Endothelial cell of umbilical vein (primary cell): ENCODE measurements at regions of chr6 and their contacts with region 1.

Region 1: DNA sequence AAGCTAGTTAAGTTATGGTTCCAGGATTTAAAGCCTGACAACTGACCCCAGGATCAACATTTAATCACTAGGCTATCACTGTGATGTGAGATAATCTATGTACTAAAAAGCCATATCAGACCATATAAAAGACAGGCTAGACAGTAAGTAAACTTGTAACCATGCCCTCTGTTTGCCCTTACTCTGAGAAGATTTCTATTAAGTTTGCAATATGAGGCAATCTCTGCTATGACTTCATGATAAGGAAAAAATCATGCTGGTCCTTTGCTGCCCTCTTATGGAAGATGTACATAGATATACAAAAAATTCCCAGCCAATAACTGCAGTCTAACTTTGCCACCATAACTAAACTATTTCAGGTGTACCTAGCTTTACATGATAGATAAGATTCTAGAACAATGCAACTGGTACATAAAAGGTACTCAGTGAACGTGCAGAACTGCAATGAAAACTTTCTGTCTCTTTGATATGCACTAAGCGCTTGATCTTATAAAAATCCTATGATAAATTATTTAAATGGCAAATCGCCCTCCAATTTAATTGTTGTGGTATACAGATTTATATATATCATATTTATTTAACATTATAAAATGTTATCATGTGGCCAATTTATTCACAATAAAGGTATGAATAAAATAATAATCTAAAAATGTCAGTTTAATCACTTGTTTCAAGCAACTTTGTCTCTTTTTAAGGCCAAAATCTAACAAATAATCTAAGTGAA is 70.5 kb downstream of the FAM217A start:
- DNase-seq: peak; percentile 76
- H3K4me3 ChIP-seq: no peak overlapping the region
- H3K27ac ChIP-seq: no peak overlapping the region
- H3K4me1 ChIP-seq: no peaks in the 10 kb centered on the region
- H3K27me3 ChIP-seq: no peaks in the 10 kb centered on the region
- CTCF ChIP-seq: peak; percentile 19 to 45
- POLR2A ChIP-seq: no peak

Region 2: DNA sequence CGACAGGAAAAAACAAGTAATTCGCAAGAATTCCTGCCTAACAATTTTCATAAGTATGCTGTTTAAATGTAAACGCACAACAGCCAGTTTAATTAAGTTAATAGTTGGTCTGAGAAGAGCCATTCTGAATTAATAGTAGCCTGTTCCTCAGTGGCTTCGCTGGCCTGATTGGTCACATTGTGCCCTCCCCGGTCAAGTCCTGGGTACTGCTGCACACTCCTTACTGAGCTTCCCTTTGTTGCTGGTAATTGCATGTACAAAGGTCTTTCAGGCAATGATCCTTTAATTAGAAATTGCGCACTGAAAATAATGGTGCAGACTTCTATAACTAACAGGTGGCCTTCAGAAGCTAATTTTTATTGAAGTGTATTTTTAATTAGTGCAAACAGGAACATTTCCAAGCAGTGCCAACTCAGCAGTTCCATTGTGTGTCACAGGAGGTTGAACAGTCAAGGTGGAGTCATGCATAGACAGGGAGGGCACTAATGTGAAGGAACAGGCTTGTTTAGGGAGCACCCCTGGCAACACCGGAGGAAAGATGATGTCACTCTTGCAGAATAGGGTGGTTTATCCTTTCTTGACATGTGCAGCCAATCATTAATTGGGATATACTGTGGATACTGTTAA is 459.1 kb before region 1 on chr6:
- CTCF ChIA-PET with region 1: no interaction called
- POLR2A ChIA-PET with region 1: no interaction called
- dilution Hi-C with region 1: no loop called
- intact Hi-C with region 1: loop called (anchors 10 kb)
- DNase-seq: peak; percentile 1
- H3K4me3 ChIP-seq: no peak overlapping the region
- H3K27ac ChIP-seq: no peak overlapping the region
- H3K4me1 ChIP-seq: no peaks in the 10 kb centered on the region
- H3K27me3 ChIP-seq: peaks cover 13 to 32% of the 10 kb centered on the region in 2 experiments
- CTCF ChIP-seq: no peak
- POLR2A ChIP-seq: no peak

Region 3: GRCh38 chr6:3742426-3743344 is 265.8 kb before region 1 on chr6:
- CTCF ChIA-PET with region 1: interaction called, 13 read pairs
- POLR2A ChIA-PET with region 1: no interaction called
- dilution Hi-C with region 1: no loop called
- intact Hi-C with region 1: loop called (anchors 1 kb)
- DNase-seq: peak; percentile 88
- H3K4me3 ChIP-seq: peak overlapping the region in 1 of 3 experiments; percentile 25
- H3K27ac ChIP-seq: peak overlapping the region; percentile 74
- H3K4me1 ChIP-seq: peaks cover 77% of the 10 kb centered on the region
- H3K27me3 ChIP-seq: no peaks in the 10 kb centered on the region
- CTCF ChIP-seq: peak; percentile 88 to 93
- POLR2A ChIP-seq: no peak

Region 4: GRCh38 chr6:3990692-3991501 is 17.6 kb before region 1 on chr6:
- CTCF ChIA-PET with region 1: interaction called, 19 read pairs
- POLR2A ChIA-PET with region 1: no interaction called
- dilution Hi-C with region 1: no loop called
- intact Hi-C with region 1: no loop called
- DNase-seq: peak; percentile 91
- H3K4me3 ChIP-seq: no peak overlapping the region
- H3K27ac ChIP-seq: no peak overlapping the region
- H3K4me1 ChIP-seq: peaks cover 17% of the 10 kb centered on the region
- H3K27me3 ChIP-seq: no peaks in the 10 kb centered on the region
- CTCF ChIP-seq: peak; percentile 92 to 94
- POLR2A ChIP-seq: no peak

Region 5: GRCh38 chr6:3997177-3997770 is 11.2 kb before region 1 on chr6:
- CTCF ChIA-PET with region 1: interaction called, 19 read pairs
- POLR2A ChIA-PET with region 1: no interaction called
- dilution Hi-C with region 1: no loop called
- intact Hi-C with region 1: no loop called
- DNase-seq: no peak
- H3K4me3 ChIP-seq: no peak overlapping the region
- H3K27ac ChIP-seq: no peak overlapping the region
- H3K4me1 ChIP-seq: no peaks in the 10 kb centered on the region
- H3K27me3 ChIP-seq: no peaks in the 10 kb centered on the region
- CTCF ChIP-seq: no peak
- POLR2A ChIP-seq: no peak

Region 6: GRCh38 chr6:4388675-4389074 is 380.2 kb after region 1 on chr6:
- CTCF ChIA-PET with region 1: no interaction called
- POLR2A ChIA-PET with region 1: no interaction called
- dilution Hi-C with region 1: no loop called
- intact Hi-C with region 1: no loop called
- DNase-seq: no peak
- H3K4me3 ChIP-seq: no peak overlapping the region
- H3K27ac ChIP-seq: no peak overlapping the region
- H3K4me1 ChIP-seq: no peaks in the 10 kb centered on the region
- H3K27me3 ChIP-seq: no peaks in the 10 kb centered on the region
- CTCF ChIP-seq: no peak
- POLR2A ChIP-seq: no peak